ENCODE measurements at regions of chr22 and their contacts with region 1.

Region 1: GRCh38 chr22:28316014-28316413 is 363.6 kb downstream of the TTC28 start:
- DNase-seq: no peak
- ATAC-seq: no peak
- H3K4me3 Mint-ChIP-seq: no peak overlapping the region
- H3K27ac Mint-ChIP-seq: no peak overlapping the region
- H3K4me1 Mint-ChIP-seq: no peaks in the 10 kb centered on the region
- H3K27me3 Mint-ChIP-seq: no peaks in the 10 kb centered on the region

Region 2: GRCh38 chr22:28297504-28297903 is 18.5 kb before region 1 on chr22:
- CTCF ChIA-PET with region 1: no interaction called
- POLR2A ChIA-PET with region 1: no interaction called
- intact Hi-C with region 1: loop called in 1 of 2 experiments (anchors 2 kb)
- DNase-seq: no peak
- ATAC-seq: no peak
- H3K4me3 Mint-ChIP-seq: no peak overlapping the region
- H3K27ac Mint-ChIP-seq: no peak overlapping the region
- H3K4me1 Mint-ChIP-seq: peaks cover 10% of the 10 kb centered on the region
- H3K27me3 Mint-ChIP-seq: no peaks in the 10 kb centered on the region

Region 3: DNA sequence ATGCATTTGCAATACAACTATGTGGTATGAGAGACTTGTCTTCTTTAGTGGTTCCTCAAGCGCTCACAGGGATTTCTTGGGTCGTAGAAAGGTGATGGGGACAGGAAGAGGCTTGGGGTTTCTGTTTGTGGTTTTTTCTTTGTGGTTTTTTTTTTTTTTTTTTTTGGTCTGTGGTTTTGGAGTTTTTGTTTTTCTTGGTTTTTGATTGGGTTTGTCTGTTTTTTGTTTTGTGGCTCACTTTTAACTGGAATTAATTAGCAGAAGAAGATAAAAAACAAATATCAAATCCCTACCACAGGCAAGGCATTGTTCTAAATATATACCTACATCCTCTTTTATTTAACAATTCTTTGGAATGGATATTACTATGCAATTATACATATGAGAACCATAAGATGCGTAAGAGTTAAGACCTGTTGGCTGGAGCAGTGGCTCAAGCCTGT is 358.1 kb after region 1 on chr22:
- CTCF ChIA-PET with region 1: no interaction called
- POLR2A ChIA-PET with region 1: no interaction called
- intact Hi-C with region 1: no loop called
- DNase-seq: peak; percentile 38
- ATAC-seq: peak; percentile 58
- H3K4me3 Mint-ChIP-seq: peak overlapping the region; percentile 73
- H3K27ac Mint-ChIP-seq: peak overlapping the region; percentile 87
- H3K4me1 Mint-ChIP-seq: peaks cover 25% of the 10 kb centered on the region
- H3K27me3 Mint-ChIP-seq: peaks cover 63% of the 10 kb centered on the region